GM12878 (cell line): ENCODE measurements at regions of chrX and their contacts with region 1.

Region 1: DNA sequence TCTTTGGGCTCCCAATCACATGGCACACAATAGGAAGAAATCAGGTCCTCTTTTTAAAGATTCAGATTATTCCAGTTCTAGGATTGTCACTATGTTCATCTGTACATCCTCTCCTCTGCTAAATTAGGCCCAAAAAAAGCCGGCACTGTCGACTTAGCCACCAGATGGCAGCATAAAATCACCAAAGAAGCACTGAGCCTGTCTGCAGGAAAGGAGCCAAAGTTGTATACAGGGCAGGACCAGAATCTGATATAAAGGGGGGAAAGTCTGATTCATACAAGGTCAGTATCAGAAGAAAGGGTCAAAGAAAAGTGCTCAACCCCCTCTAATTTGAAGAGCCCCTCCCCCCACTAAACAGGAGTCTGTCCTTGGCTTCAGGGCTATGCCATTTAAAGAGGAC is 292.5 kb downstream of the CHIC1 start:
- DNase-seq: peak; percentile 31
- ATAC-seq: peak; percentile 41
- H3K4me3 ChIP-seq: no peak overlapping the region
- H3K27ac ChIP-seq: no peak overlapping the region
- H3K4me1 ChIP-seq: no peaks in the 10 kb centered on the region
- H3K27me3 ChIP-seq: no peaks in the 10 kb centered on the region
- CTCF ChIP-seq: peak; percentile 73 to 92 (median 79); a peak in 5 of 6 replicates
- EP300 ChIP-seq: no peak
- POLR2A ChIP-seq: no peak
- RAD21 ChIP-seq: peak; percentile 99

Region 2: DNA sequence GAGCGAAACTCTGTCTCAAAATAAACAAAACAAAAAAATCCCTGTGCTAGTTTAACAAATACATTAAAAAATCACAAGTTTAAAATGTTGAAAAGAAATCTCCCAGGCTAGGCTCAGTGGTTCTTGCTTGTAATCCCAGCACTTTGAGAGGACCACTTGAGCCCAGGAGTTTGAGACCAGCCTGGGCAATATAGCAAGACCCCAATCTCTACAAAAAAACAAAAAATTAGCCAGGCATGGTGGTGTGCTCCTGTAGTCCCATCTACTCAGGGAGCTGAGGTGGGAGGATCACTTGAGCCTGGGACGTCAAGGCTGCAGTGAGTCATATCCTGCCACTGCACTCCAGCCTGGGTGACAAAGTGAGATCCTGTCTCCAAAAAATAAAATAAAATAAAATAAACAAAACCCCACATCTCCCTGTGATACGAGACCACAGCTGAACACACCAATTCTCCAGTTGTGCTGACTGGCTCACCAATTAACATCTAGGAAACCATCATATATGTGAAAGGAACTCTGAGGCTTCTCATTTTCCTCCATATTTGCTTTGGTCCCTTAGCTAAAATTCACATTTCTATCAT is 1585.8 kb before region 1 on chrX:
- CTCF ChIA-PET with region 1: no interaction called
- POLR2A ChIA-PET with region 1: no interaction called
- RAD21 ChIA-PET with region 1: no interaction called
- SMC1A ChIA-PET with region 1: no interaction called
- in situ Hi-C with region 1: loop called (anchors 10 kb)
- intact Hi-C with region 1: no loop called
- DNase-seq: no peak
- ATAC-seq: peak; percentile 14; the same call in 2 of the 3 replicates
- H3K4me3 ChIP-seq: no peak overlapping the region
- H3K27ac ChIP-seq: no peak overlapping the region
- H3K4me1 ChIP-seq: peaks cover 4% of the 10 kb centered on the region; the same call in 1 of the 2 replicates
- H3K27me3 ChIP-seq: no peaks in the 10 kb centered on the region
- CTCF ChIP-seq: no peak
- EP300 ChIP-seq: no peak
- POLR2A ChIP-seq: no peak
- RAD21 ChIP-seq: no peak

Region 3: GRCh38 chrX:74015379-74016019 is 160.0 kb after region 1 on chrX:
- CTCF ChIA-PET with region 1: interaction called, 45 read pairs
- POLR2A ChIA-PET with region 1: interaction called, 6 read pairs
- RAD21 ChIA-PET with region 1: interaction called, 27 read pairs
- SMC1A ChIA-PET with region 1: interaction called, 27 read pairs
- in situ Hi-C with region 1: loop called (anchors 5 kb)
- intact Hi-C with region 1: loop called (anchors 1 kb)
- DNase-seq: peak; percentile 37
- ATAC-seq: peak; percentile 100
- H3K4me3 ChIP-seq: no peak overlapping the region
- H3K27ac ChIP-seq: no peak overlapping the region
- H3K4me1 ChIP-seq: no peaks in the 10 kb centered on the region
- H3K27me3 ChIP-seq: no peaks in the 10 kb centered on the region
- CTCF ChIP-seq: peak; percentile 76 to 97 (median 83)
- EP300 ChIP-seq: no peak
- POLR2A ChIP-seq: no peak
- RAD21 ChIP-seq: peak; percentile 99

Region 4: DNA sequence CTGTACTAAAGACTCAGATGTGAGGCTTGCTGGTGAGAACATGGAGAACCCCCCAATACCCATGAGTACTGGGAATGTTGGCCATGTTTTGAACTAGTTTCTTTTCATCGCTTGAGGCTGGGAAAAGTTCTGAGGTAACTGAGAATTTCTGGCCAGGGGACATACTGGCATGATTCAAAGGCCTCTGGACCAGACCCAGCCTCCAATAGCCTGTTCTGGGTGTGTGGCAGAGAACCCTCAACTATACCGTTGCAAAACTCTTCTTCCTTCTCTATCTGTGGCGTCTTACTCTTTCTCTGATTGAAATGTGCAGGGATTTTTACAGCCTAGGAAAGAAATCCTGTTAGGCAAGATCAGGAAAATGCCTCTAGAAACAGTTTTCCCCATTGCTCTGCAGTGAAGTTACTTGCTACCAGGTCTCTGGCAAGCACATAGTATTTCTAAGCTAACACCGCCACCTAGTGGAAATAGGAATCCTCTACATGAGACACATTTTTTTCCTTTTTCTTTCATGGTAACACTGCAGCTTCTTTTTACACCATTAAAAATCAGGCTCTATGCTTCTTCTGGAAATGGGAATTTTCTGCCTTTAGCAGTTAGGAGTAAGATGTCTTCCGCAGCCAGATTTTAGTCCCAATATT is 277.7 kb after region 1 on chrX:
- CTCF ChIA-PET with region 1: interaction called, 7 read pairs
- POLR2A ChIA-PET with region 1: no interaction called
- RAD21 ChIA-PET with region 1: interaction called, 15 read pairs
- SMC1A ChIA-PET with region 1: interaction called, 6 read pairs
- in situ Hi-C with region 1: loop called (anchors 5 kb)
- intact Hi-C with region 1: loop called (anchors 1 kb)
- DNase-seq: peak; percentile 19
- ATAC-seq: peak; percentile 93
- H3K4me3 ChIP-seq: no peak overlapping the region
- H3K27ac ChIP-seq: no peak overlapping the region
- H3K4me1 ChIP-seq: no peaks in the 10 kb centered on the region
- H3K27me3 ChIP-seq: no peaks in the 10 kb centered on the region
- CTCF ChIP-seq: peak; percentile 71 to 80 (median 73)
- EP300 ChIP-seq: no peak
- POLR2A ChIP-seq: no peak
- RAD21 ChIP-seq: peak; percentile 93

Region 5: DNA sequence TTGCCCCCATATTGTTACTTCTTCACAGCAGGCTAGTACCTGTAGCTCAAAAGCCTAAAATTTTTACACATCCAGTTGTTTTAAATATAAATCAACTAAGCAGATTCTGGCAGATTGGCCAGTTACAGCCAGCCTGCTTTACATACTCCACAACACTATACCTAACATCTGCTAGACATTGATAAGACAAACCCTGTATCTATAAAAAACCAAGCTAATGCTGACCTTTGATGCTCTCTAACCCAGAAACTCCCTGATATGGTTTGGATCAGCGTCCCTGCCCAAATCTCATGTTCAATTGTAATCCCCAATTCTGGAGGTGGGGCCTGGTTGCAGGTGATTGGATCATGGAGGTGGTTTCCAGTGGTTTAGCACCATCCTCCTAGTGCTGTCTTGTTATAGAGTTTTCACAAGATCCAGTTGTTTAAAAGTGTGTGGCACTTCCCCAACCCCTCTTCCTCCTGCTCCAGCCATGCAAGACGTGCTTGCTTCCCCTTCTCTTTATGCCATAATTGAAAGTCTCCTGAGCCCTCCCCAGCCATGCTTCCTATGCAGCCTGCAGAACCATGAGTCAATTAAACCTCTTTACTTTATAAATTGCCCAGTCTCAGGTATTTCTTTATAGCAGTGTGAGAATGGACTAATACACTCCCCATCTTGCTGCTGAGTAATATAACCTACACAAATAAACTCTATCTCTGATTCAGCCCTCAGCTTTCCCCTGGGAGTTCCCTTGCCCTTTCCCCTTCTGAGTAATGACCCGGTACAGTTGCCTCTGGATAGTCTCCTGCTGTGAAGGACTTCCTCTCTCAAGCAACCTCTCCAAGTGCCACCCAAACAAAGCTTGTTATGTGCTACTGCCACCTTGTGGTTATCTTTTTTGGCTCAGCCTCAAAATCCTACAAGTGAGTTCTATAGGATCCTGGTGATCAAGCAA is 488.1 kb after region 1 on chrX:
- CTCF ChIA-PET with region 1: interaction called, 22 read pairs
- POLR2A ChIA-PET with region 1: no interaction called
- RAD21 ChIA-PET with region 1: no interaction called
- SMC1A ChIA-PET with region 1: interaction called, 4 read pairs
- in situ Hi-C with region 1: loop called (anchors 10 kb)
- intact Hi-C with region 1: loop called (anchors 1 kb)
- DNase-seq: peak; percentile 39
- ATAC-seq: peak; percentile 95
- H3K4me3 ChIP-seq: no peak overlapping the region
- H3K27ac ChIP-seq: no peak overlapping the region
- H3K4me1 ChIP-seq: no peaks in the 10 kb centered on the region
- H3K27me3 ChIP-seq: no peaks in the 10 kb centered on the region
- CTCF ChIP-seq: peak; percentile 55 to 74 (median 73)
- EP300 ChIP-seq: no peak
- POLR2A ChIP-seq: no peak
- RAD21 ChIP-seq: peak; percentile 80

Region 6: GRCh38 chrX:74536152-74536831 is 680.7 kb after region 1 on chrX:
- CTCF ChIA-PET with region 1: no interaction called
- POLR2A ChIA-PET with region 1: no interaction called
- RAD21 ChIA-PET with region 1: no interaction called
- SMC1A ChIA-PET with region 1: no interaction called
- in situ Hi-C with region 1: loop called (anchors 10 kb)
- intact Hi-C with region 1: no loop called
- DNase-seq: no peak
- ATAC-seq: peak; percentile 79
- H3K4me3 ChIP-seq: peak overlapping the region; percentile 63
- H3K27ac ChIP-seq: peak overlapping the region; percentile 25
- H3K4me1 ChIP-seq: peaks cover 6% of the 10 kb centered on the region
- H3K27me3 ChIP-seq: no peaks in the 10 kb centered on the region
- CTCF ChIP-seq: peak in 2 of 3 experiments; percentile 22 to 40; a peak in 3 of 6 replicates
- EP300 ChIP-seq: no peak
- POLR2A ChIP-seq: no peak
- RAD21 ChIP-seq: no peak

Region 7: GRCh38 chrX:74550295-74550802 is 694.8 kb after region 1 on chrX:
- CTCF ChIA-PET with region 1: no interaction called
- POLR2A ChIA-PET with region 1: no interaction called
- RAD21 ChIA-PET with region 1: no interaction called
- SMC1A ChIA-PET with region 1: no interaction called
- in situ Hi-C with region 1: loop called (anchors 10 kb)
- intact Hi-C with region 1: loop called (anchors 5 kb)
- DNase-seq: peak; percentile 35
- ATAC-seq: peak; percentile 98
- H3K4me3 ChIP-seq: no peak overlapping the region
- H3K27ac ChIP-seq: no peak overlapping the region
- H3K4me1 ChIP-seq: no peaks in the 10 kb centered on the region
- H3K27me3 ChIP-seq: no peaks in the 10 kb centered on the region
- CTCF ChIP-seq: peak; percentile 97 to 99 (median 98)
- EP300 ChIP-seq: no peak
- POLR2A ChIP-seq: no peak
- RAD21 ChIP-seq: peak; percentile 86